Activated CD4-positive, alpha-beta T cell treated with anti-CD3 and anti-CD28 coated beads for 36 hours (primary cell): ENCODE measurements at regions of chr4 and their contacts with region 1.

Region 1: GRCh38 chr4:129641179-129641578 is 545.2 kb downstream of the C4orf33 start:
- DNase-seq: peak; percentile 70
- ATAC-seq: no peak
- H3K4me3 Mint-ChIP-seq: no peak overlapping the region
- H3K27ac Mint-ChIP-seq: no peak overlapping the region
- H3K4me1 Mint-ChIP-seq: no peaks in the 10 kb centered on the region
- H3K27me3 Mint-ChIP-seq: no peaks in the 10 kb centered on the region

Region 2: GRCh38 chr4:128574706-128575105 is 1066.5 kb before region 1 on chr4:
- CTCF ChIA-PET with region 1: no interaction called
- POLR2A ChIA-PET with region 1: no interaction called
- intact Hi-C with region 1: loop called in 1 of 2 experiments (anchors 10 kb)
- DNase-seq: peak; percentile 87
- ATAC-seq: peak; percentile 84
- H3K4me3 Mint-ChIP-seq: no peak overlapping the region
- H3K27ac Mint-ChIP-seq: no peak overlapping the region
- H3K4me1 Mint-ChIP-seq: no peaks in the 10 kb centered on the region
- H3K27me3 Mint-ChIP-seq: no peaks in the 10 kb centered on the region

Region 3: DNA sequence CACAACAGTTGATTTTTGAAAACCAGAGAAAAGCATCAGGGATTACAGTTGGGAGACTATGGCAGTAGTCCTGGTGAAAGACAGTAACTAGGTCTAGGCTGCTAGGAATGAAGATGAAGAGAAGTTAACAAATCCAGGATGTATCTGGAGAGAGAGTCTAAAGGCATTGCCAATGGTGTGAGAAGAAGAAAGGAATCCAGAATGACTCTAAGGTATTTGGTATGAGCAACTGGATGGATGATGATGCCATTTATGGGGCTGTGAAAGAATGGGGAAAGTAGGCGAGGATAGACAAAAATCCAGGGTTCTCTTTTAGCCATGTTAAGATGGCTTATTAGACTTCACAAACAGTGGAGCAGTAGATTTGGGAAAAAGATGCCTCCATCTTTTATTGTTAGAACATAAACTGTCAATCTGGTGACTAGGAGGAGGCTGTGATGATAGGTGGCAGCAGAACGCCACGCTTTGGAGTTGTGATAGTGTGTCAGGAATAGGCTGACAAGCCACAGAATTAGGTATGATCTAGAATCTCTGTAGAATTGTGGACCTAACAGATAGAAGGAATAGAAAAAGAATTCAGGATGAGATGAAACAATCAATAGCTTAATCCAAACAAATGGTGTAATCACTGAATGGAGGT is 859.0 kb before region 1 on chr4:
- CTCF ChIA-PET with region 1: no interaction called
- POLR2A ChIA-PET with region 1: no interaction called
- intact Hi-C with region 1: loop called in 1 of 2 experiments (anchors 10 kb)
- DNase-seq: peak; percentile 59
- ATAC-seq: peak; percentile 65
- H3K4me3 Mint-ChIP-seq: no peak overlapping the region
- H3K27ac Mint-ChIP-seq: no peak overlapping the region
- H3K4me1 Mint-ChIP-seq: no peaks in the 10 kb centered on the region
- H3K27me3 Mint-ChIP-seq: peaks cover 2% of the 10 kb centered on the region

Region 4: DNA sequence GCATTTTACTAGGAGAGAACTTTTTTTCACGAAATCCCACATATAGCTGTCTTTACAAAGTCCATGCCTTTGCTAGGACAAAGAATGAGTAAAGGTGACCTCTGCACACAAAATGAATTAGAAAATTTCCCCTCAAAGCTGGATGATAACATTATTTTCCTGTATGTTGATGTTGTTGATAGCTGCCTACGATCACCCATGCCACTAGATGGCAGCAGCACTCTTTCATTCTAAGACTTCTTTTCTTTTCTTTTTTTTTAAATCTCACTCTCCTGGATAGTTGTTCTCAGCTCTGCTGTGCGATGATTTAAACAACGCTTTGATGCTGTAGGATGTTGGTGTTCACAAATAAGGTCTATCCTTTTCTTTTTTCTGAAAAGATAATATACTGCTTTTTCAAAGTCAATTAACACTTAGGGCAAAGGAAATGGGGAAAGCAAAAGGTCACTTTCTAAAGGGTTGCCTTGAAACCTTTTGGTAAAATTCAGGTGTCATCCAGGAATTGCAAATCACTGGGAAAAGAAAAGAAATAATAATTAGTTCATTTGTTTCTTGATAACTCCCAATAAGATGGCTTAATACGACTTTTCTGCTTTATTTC is 278.4 kb before region 1 on chr4:
- CTCF ChIA-PET with region 1: interaction called, 38 read pairs
- POLR2A ChIA-PET with region 1: no interaction called
- intact Hi-C with region 1: loop called (anchors 1 kb)
- DNase-seq: peak; percentile 69
- ATAC-seq: peak; percentile 42
- H3K4me3 Mint-ChIP-seq: no peak overlapping the region
- H3K27ac Mint-ChIP-seq: no peak overlapping the region
- H3K4me1 Mint-ChIP-seq: no peaks in the 10 kb centered on the region
- H3K27me3 Mint-ChIP-seq: peaks cover 4% of the 10 kb centered on the region